ENCODE measurements at regions of chr6 and their contacts with region 1.

Region 1: DNA sequence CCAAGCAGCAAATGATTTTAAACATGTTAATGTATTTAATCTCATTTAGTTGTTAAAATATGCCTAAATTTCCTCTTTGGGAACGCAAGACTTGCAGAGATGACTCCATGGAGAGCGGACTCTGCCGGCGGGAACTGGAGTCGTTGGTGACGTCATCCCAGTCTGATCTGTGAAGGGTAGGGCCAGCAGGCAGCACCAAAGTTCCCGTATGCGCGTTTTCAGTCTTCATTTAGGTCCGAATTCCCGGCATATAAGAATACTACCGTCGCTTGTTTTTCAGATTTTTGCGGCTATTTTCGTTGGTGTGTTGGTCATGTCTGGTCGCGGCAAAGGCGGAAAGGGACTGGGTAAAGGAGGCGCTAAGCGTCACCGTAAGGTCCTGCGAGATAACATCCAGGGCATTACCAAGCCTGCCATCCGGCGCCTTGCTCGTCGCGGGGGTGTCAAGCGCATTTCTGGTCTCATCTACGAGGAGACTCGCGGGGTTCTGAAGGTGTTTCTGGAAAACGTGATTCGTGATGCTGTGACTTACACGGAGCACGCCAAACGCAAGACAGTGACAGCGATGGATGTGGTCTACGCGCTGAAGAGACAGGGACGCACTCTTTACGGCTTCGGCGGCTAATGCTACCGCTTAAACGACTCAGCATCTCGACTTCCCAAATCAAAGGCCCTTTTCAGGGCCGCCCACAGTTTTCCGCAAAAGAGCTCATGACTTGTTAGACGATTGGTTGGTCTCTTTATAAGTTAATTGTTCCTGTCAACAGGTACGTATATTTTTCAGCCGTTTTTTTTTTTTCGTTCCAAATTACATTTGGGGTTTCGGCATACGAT is 117.3 kb downstream of the HFE start:
- DNase-seq: peak; percentile 98
- H3K4me3 Mint-ChIP-seq: no peak overlapping the region
- H3K27ac Mint-ChIP-seq: no peak overlapping the region
- H3K4me1 Mint-ChIP-seq: peaks cover 3% of the 10 kb centered on the region
- H3K27me3 Mint-ChIP-seq: no peaks in the 10 kb centered on the region
- CTCF ChIP-seq: no peak

Region 2: GRCh38 chr6:25404693-25405169 is 799.8 kb before region 1 on chr6:
- CTCF ChIA-PET with region 1: no interaction called
- POLR2A ChIA-PET with region 1: no interaction called
- intact Hi-C with region 1: no loop called
- DNase-seq: peak; percentile 9
- H3K4me3 Mint-ChIP-seq: no peak overlapping the region
- H3K27ac Mint-ChIP-seq: no peak overlapping the region
- H3K4me1 Mint-ChIP-seq: no peaks in the 10 kb centered on the region
- H3K27me3 Mint-ChIP-seq: no peaks in the 10 kb centered on the region
- CTCF ChIP-seq: no peak

Region 3: GRCh38 chr6:25927756-25928216 is 276.8 kb before region 1 on chr6:
- CTCF ChIA-PET with region 1: no interaction called
- POLR2A ChIA-PET with region 1: no interaction called
- intact Hi-C with region 1: no loop called
- DNase-seq: no peak
- H3K4me3 Mint-ChIP-seq: no peak overlapping the region
- H3K27ac Mint-ChIP-seq: no peak overlapping the region
- H3K4me1 Mint-ChIP-seq: no peaks in the 10 kb centered on the region
- H3K27me3 Mint-ChIP-seq: no peaks in the 10 kb centered on the region
- CTCF ChIP-seq: no peak

Region 4: GRCh38 chr6:26045065-26045927 is 159.3 kb before region 1 on chr6:
- CTCF ChIA-PET with region 1: no interaction called
- POLR2A ChIA-PET with region 1: interaction called, 158 read pairs
- intact Hi-C with region 1: no loop called
- DNase-seq: peak; percentile 95
- H3K4me3 Mint-ChIP-seq: peak overlapping the region; percentile 80
- H3K27ac Mint-ChIP-seq: peak overlapping the region; percentile 86
- H3K4me1 Mint-ChIP-seq: peaks cover 16% of the 10 kb centered on the region
- H3K27me3 Mint-ChIP-seq: no peaks in the 10 kb centered on the region
- CTCF ChIP-seq: no peak

Region 5: DNA sequence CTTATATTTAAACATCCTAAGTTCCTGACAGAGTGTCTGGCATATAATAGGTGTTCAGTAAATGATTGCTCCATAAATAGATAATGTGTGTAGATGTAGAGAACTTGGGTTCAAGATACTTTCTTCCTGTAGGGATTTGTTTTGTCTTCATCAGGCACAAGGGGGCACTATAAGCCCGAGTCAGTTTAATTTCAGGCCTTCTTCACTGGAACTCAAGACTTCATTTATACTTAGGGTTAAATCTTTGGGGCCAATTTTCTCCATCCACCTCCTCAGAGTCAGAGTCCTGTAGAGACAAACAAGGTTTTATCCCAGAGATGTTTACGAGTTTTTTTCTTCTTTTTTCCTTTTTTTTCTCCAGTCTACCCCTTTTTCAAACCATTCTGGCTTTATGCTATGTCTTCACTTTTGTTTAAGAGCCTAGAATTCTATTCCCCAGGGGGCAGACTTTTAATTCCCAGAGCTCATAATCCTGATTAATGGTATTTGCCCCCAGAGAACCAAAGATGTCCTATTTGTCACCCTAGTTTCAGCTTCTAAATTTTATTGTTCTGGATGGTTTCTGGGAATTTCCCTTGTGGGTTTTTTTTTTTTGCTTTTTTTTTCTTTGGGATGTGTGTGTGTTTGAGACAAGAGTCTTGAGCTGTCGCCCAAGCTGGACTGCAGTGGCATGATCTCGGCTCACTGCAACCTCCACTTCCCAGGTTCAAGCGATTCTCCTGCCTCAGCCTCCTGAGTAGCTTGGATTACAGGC is 28.9 kb before region 1 on chr6:
- CTCF ChIA-PET with region 1: interaction called, 3 read pairs
- POLR2A ChIA-PET with region 1: interaction called, 378 read pairs
- intact Hi-C with region 1: loop called (anchors 1 kb)
- DNase-seq: peak; percentile 82
- H3K4me3 Mint-ChIP-seq: peak overlapping the region; percentile 23
- H3K27ac Mint-ChIP-seq: peak overlapping the region; percentile 70
- H3K4me1 Mint-ChIP-seq: peaks cover 28% of the 10 kb centered on the region
- H3K27me3 Mint-ChIP-seq: no peaks in the 10 kb centered on the region
- CTCF ChIP-seq: peak; percentile 70

Region 6: DNA sequence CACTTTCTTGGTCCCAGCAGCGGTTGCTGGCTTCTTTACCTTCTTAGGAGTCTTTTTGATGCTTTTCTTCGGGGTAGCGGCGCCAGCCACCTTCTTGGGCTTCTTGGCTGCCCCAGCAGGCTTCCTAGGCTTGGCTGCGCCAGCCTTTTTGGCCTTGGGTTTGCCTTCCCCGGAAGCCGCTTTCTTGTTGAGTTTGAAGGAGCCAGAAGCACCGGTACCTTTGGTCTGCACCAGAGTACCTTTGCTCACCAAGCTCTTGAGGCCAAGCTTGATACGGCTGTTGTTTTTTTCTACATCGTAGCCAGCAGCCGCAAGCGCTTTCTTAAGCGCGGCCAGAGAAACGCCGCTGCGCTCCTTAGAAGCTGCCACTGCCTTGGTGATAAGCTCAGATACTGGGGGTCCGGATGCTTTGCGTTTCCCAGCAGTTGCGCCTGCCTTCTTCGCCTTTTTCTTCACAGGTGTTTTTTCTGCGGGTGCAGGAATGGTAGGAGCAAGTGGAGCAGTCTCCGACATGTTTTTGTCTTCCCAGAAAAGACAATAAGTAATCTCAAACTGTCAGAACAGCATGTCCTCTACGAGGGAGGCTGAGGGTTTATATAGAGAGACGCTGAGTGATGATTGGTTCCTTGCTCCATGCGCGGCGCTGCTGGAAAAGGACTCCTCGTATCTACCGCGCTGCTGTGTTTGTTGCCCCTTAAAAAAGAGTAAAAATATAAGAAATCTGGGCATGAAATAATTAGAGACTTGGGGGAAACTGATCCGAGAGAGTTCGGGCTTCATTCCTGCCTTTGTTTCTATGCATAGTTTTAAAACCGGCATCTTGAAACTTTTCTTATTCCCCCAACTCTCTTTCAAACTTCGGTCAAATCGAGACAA is 30.1 kb after region 1 on chr6:
- CTCF ChIA-PET with region 1: no interaction called
- POLR2A ChIA-PET with region 1: interaction called, 108 read pairs
- intact Hi-C with region 1: no loop called
- DNase-seq: peak; percentile 90
- H3K4me3 Mint-ChIP-seq: peak overlapping the region; percentile 82
- H3K27ac Mint-ChIP-seq: peak overlapping the region; percentile 85
- H3K4me1 Mint-ChIP-seq: peaks cover 32% of the 10 kb centered on the region
- H3K27me3 Mint-ChIP-seq: no peaks in the 10 kb centered on the region
- CTCF ChIP-seq: no peak

Region 7: GRCh38 chr6:26351544-26351953 is 147.0 kb after region 1 on chr6:
- CTCF ChIA-PET with region 1: no interaction called
- POLR2A ChIA-PET with region 1: no interaction called
- intact Hi-C with region 1: no loop called
- DNase-seq: peak; percentile 90
- H3K4me3 Mint-ChIP-seq: no peak overlapping the region
- H3K27ac Mint-ChIP-seq: peak overlapping the region; percentile 25
- H3K4me1 Mint-ChIP-seq: peaks cover 6% of the 10 kb centered on the region
- H3K27me3 Mint-ChIP-seq: no peaks in the 10 kb centered on the region
- CTCF ChIP-seq: no peak

Region 8: GRCh38 chr6:27132532-27133280 is 928.2 kb after region 1 on chr6:
- CTCF ChIA-PET with region 1: no interaction called
- POLR2A ChIA-PET with region 1: interaction called, 100 read pairs
- intact Hi-C with region 1: no loop called
- DNase-seq: peak; percentile 99
- H3K4me3 Mint-ChIP-seq: no peak overlapping the region
- H3K27ac Mint-ChIP-seq: no peak overlapping the region
- H3K4me1 Mint-ChIP-seq: peaks cover 11% of the 10 kb centered on the region
- H3K27me3 Mint-ChIP-seq: no peaks in the 10 kb centered on the region
- CTCF ChIP-seq: no peak